Activated CD4-positive, alpha-beta memory T cell treated with anti-CD3 and anti-CD28 coated beads, Interleukin-2, amount 10 ng/mL, durations not matched to agents 7 days and 5 days (primary cell): ENCODE measurements at regions of chr1 and their contacts with region 1.

Region 1: GRCh38 chr1:156096640-156097391 is 14.6 kb upstream of the MEX3A start:
- DNase-seq: peak; percentile 88
- H3K4me3 Mint-ChIP-seq: peak overlapping the region; percentile 25
- H3K27ac Mint-ChIP-seq: peak overlapping the region; percentile 83
- H3K4me1 Mint-ChIP-seq: peaks cover 42% of the 10 kb centered on the region
- H3K27me3 Mint-ChIP-seq: peaks cover 13% of the 10 kb centered on the region

Region 2: DNA sequence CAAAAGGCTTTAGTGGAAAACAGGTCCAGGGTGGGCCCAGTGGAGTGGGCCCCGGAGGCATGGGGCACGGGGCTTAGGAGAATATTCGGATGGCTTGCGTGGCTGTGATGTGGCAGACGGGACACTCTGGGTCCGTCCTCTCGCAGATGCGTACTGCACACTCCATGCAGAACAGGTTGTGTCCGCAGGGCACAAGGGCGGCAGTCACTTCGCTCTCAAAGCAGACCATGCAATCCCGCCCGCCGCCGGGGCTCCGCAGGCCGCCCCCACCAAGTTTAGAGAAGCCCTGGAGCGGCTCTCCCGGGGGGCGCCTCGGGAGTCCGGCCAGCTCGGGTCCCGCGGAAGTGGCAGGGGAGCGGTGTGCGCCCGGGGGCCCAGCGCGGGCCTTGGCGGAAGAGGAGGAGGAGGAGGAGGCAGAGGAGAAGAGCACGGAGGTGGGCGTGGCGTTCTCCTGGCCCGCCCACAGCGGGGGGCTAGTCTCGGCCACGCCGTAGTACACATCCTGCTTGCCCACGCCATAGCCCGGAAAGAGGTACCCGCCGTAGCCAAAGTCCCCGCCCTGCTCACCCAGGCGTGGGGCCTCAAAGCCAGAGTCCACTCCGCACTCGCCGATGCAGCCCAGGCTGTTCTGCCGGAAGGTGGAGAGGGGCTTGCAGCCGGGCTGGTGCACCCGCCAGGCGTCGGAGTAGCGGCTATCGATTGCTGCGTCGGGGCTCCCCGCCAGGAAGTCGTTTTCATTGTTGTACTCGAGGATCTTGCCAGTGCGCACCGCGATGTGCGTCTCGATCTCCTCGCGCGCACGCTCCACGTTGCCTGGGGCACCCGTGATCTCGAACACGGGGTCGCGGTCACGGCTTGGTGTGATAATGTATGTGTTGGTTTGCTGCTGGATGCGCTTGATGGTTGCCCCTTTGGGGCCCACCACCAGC is 20.1 kb before region 1 on chr1:
- CTCF ChIA-PET with region 1: no interaction called
- POLR2A ChIA-PET with region 1: no interaction called
- DNase-seq: no peak
- H3K4me3 Mint-ChIP-seq: no peak overlapping the region
- H3K27ac Mint-ChIP-seq: no peak overlapping the region
- H3K4me1 Mint-ChIP-seq: peaks cover 6% of the 10 kb centered on the region
- H3K27me3 Mint-ChIP-seq: peaks cover 37% of the 10 kb centered on the region

Region 3: GRCh38 chr1:156122519-156123355 is 25.9 kb after region 1 on chr1:
- CTCF ChIA-PET with region 1: interaction called, 612 read pairs
- POLR2A ChIA-PET with region 1: interaction called, 222 read pairs
- DNase-seq: no peak
- H3K4me3 Mint-ChIP-seq: no peak overlapping the region
- H3K27ac Mint-ChIP-seq: peak overlapping the region; percentile 78
- H3K4me1 Mint-ChIP-seq: peaks cover 83% of the 10 kb centered on the region
- H3K27me3 Mint-ChIP-seq: no peaks in the 10 kb centered on the region

Region 4: DNA sequence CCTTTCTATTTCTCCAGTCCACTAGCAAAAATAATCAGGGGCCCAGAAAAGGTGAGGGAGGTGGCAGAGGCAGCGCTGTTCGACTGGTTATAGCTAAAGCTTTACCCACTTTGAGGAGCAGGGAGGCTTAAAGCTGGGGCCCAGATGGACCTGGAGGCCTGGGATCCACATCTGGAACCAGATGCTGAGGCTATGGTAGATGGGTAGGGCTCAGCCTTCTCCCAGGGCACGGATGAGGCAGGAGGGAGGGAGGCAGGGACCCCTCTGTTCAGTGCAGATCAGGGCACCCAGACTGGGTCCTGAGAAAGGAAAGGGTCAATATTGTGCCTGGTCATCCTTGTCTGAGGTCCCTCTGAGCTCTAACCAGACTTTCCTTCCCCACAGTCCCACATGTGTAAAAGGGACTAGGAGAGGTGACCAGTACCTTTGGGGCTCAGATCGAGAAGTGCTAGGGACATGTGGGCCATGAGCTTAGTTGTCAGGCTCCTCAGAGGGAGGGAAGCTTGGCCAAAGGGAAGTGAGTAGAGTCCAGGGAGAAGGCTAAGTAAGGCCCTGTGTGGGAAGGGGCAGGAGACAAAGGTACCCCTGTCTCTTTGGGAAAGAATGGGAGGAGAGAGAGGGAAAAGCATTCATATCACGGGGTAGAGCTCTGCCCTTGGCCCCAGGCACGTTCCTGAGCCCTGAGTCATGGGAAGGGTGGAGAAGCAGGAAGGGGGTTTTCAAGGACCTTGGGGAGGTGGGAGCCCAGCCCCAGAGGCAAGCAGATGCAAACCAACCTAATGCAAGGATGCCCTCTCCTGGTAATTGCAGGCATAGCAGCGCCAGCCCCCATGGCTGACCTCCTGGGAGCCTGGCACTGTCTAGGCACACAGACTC is 33.1 kb after region 1 on chr1:
- CTCF ChIA-PET with region 1: interaction called, 612 read pairs
- POLR2A ChIA-PET with region 1: interaction called, 222 read pairs
- DNase-seq: peak; percentile 83
- H3K4me3 Mint-ChIP-seq: no peak overlapping the region
- H3K27ac Mint-ChIP-seq: no peak overlapping the region
- H3K4me1 Mint-ChIP-seq: peaks cover 53% of the 10 kb centered on the region
- H3K27me3 Mint-ChIP-seq: no peaks in the 10 kb centered on the region